Testis (tissue), 5 donors: ENCODE measurements at regions of chr4 and their contacts with region 1.

Region 1: GRCh38 chr4:39763714-39764572 is 66.0 kb downstream of the UBE2K start:
- DNase-seq: no peak
- H3K4me3 ChIP-seq: no peak overlapping the region
- H3K27ac ChIP-seq: no peak overlapping the region
- H3K4me1 ChIP-seq: no peaks in the 10 kb centered on the region
- H3K27me3 ChIP-seq: no peaks in the 10 kb centered on the region
- CTCF ChIP-seq: no peak
- POLR2A ChIP-seq: no peak

Region 2: GRCh38 chr4:39657465-39657864 is 106.5 kb before region 1 on chr4:
- intact Hi-C with region 1: no loop called
- DNase-seq: no peak
- H3K4me3 ChIP-seq: no peak overlapping the region
- H3K27ac ChIP-seq: no peak overlapping the region
- H3K4me1 ChIP-seq: no peaks in the 10 kb centered on the region
- H3K27me3 ChIP-seq: no peaks in the 10 kb centered on the region
- CTCF ChIP-seq: no peak
- POLR2A ChIP-seq: no peak

Region 3: DNA sequence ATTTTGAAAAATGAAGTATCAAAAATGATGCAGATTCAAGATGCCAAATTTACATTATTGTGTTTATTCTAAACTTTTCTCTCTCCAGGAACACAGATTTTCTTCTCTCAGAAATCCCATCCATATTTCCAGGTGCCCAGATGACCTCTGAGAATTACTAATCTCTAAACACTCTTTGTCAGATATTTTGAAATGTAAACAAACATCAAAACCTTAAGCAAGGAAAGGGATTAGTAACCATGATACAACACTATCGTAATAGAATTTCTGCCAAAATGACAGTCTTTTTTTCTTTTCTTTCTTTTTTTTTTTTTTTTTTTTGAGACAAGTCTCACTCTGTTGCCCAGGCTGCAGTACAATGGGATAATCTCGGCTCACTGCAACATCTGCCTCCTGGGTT is 137.0 kb after region 1 on chr4:
- intact Hi-C with region 1: loop called (anchors 5 kb)
- DNase-seq: no peak
- H3K4me3 ChIP-seq: no peak overlapping the region
- H3K27ac ChIP-seq: no peak overlapping the region
- H3K4me1 ChIP-seq: no peaks in the 10 kb centered on the region
- H3K27me3 ChIP-seq: no peaks in the 10 kb centered on the region
- CTCF ChIP-seq: no peak
- POLR2A ChIP-seq: no peak

Region 4: GRCh38 chr4:39922389-39922788 is 158.4 kb after region 1 on chr4:
- intact Hi-C with region 1: no loop called
- DNase-seq: no peak
- H3K4me3 ChIP-seq: no peak overlapping the region
- H3K27ac ChIP-seq: no peak overlapping the region
- H3K4me1 ChIP-seq: no peaks in the 10 kb centered on the region
- H3K27me3 ChIP-seq: no peaks in the 10 kb centered on the region
- CTCF ChIP-seq: no peak
- POLR2A ChIP-seq: no peak